Caco-2 (cell line): ENCODE measurements at regions of chr5 and their contacts with region 1.

Region 1: DNA sequence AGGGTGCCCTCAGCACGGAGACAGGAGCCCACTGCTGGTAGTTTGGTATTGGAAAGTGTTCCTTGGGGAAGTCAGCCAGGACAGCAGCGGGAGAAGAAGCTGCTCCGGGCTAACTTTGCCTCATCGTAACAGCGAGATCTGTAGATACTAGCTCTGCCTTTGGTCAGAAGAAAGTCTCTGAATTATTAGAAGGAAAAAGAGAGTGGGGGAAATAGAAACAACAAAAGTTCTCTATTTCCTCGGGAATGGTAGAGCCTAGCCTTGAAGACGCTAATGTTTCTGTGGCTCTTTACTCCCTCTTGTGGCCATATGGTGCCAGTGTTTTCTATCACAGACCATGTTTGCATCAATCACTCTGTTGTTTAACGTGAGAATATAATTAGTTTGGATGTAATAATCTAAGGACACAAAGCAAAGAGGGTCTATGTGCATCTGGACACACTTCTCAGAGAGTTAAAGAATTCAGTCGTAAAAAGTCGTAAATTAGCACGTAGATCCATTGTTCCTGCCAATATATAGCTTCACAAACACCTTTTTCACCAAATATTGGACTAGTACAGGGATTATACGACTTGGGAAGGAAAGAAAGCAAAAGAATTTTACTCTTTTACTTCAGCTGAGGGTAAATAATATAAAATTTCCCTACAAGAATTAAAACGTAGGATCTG is 40.2 kb upstream of the HSD17B4 start:
- DNase-seq: peak; percentile 60 to 67
- H3K4me3 ChIP-seq: peak overlapping the region; percentile 54
- H3K4me3 Mint-ChIP-seq: peak overlapping the region; percentile 75
- H3K27ac Mint-ChIP-seq: peak overlapping the region; percentile 68
- H3K4me1 ChIP-seq: no peaks in the 10 kb centered on the region
- H3K4me1 Mint-ChIP-seq: peaks cover under 1% of the 10 kb centered on the region
- H3K27me3 ChIP-seq: no peaks in the 10 kb centered on the region
- H3K27me3 Mint-ChIP-seq: no peaks in the 10 kb centered on the region
- CTCF ChIP-seq: peak; percentile 89 to 96

Region 2: GRCh38 chr5:119022017-119022745 is 389.9 kb before region 1 on chr5:
- CTCF ChIA-PET with region 1: interaction called, 13 read pairs
- POLR2A ChIA-PET with region 1: no interaction called
- intact Hi-C with region 1: loop called (anchors 1 kb)
- DNase-seq: peak in 1 of 2 experiments; percentile 34
- H3K4me3 ChIP-seq: no peak overlapping the region
- H3K4me3 Mint-ChIP-seq: no peak overlapping the region
- H3K27ac Mint-ChIP-seq: no peak overlapping the region
- H3K4me1 ChIP-seq: no peaks in the 10 kb centered on the region
- H3K4me1 Mint-ChIP-seq: peaks cover 7% of the 10 kb centered on the region
- H3K27me3 ChIP-seq: no peaks in the 10 kb centered on the region
- H3K27me3 Mint-ChIP-seq: no peaks in the 10 kb centered on the region
- CTCF ChIP-seq: peak; percentile 53 to 54

Region 3: DNA sequence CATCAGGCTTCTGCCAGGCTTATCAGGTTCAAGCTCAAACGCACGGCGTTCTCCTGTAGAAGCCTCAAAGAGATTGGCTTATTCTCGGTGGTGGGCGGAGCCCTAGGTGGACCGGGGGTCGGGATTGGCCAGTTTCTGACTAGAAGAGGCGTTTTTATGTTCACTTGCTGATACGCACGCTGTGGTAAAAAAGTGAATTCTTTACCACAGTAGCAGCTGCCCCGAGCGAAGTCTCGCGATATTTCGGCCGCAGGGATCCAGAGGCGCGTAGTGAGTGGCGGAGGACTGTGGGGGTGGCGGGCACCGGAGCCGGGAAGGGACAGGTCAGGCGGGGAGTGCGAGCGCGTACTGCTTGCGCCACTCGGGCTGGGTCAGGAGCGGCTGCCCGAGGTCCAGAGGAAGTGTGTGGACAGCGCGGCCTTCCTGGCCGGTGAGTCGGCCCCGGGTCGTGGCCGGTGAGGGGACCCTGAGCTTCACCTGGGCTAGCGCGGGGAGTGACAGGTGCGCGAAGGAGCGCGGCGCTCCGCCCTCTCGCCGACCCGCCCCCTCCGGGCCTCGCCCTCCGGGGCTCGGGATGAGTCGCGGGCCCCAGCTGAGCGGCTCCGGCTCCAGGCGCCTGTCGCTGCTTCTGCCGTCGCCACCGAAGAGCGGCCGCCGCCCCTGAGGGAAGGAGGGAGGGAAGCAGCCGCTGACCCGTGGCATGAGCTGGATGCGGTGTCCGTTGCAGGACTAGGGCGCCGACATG is 341.1 kb before region 1 on chr5 and contains the start of gene DMXL1:
- CTCF ChIA-PET with region 1: no interaction called
- POLR2A ChIA-PET with region 1: no interaction called
- intact Hi-C with region 1: loop called (anchors 5 kb)
- DNase-seq: peak; percentile 99 to 100
- H3K4me3 ChIP-seq: peak within 1 kb of the TSS; percentile 86
- H3K4me3 Mint-ChIP-seq: peak within 1 kb of the TSS; percentile 86
- H3K27ac Mint-ChIP-seq: peak within 1 kb of the TSS; percentile 96
- H3K4me1 ChIP-seq: no peaks in the 10 kb centered on the region
- H3K4me1 Mint-ChIP-seq: peaks cover 6% of the 10 kb centered on the region
- H3K27me3 ChIP-seq: no peaks in the 10 kb centered on the region
- H3K27me3 Mint-ChIP-seq: no peaks in the 10 kb centered on the region
- CTCF ChIP-seq: no peak
- total RNA-seq, gene DMXL1: 30.0 and 33.1 TPM in 2 replicates

Region 4: DNA sequence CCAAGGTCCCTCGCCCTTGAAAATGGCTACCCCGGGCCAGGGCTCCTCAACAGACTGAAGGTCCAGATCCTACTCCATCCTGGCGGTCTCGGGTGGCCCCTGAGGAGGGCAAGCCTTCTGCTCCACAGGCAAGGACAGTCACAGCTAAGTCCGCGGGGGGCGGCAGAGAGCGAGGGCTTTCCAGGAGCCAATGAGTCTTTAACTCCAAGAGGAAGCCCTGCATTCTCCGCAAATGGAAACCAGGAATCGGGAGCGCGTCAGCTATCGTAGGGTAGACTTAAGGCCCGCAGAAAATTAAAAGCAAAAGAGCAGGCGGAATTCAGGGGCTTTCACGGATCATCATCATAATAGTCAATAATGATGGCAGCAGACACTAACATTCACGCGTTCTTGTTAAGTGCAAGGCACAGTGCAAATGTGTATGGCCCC is 144.1 kb before region 1 on chr5:
- CTCF ChIA-PET with region 1: interaction called, 12 read pairs
- POLR2A ChIA-PET with region 1: interaction called, 7 read pairs
- intact Hi-C with region 1: loop called (anchors 1 kb)
- DNase-seq: peak; percentile 91 to 92
- H3K4me3 ChIP-seq: peak overlapping the region; percentile 68
- H3K4me3 Mint-ChIP-seq: peak overlapping the region; percentile 87
- H3K27ac Mint-ChIP-seq: peak overlapping the region; percentile 74
- H3K4me1 ChIP-seq: peaks cover under 1% of the 10 kb centered on the region
- H3K4me1 Mint-ChIP-seq: peaks cover 8% of the 10 kb centered on the region
- H3K27me3 ChIP-seq: no peaks in the 10 kb centered on the region
- H3K27me3 Mint-ChIP-seq: no peaks in the 10 kb centered on the region
- CTCF ChIP-seq: peak in 1 of 2 experiments; percentile 51

Region 5: DNA sequence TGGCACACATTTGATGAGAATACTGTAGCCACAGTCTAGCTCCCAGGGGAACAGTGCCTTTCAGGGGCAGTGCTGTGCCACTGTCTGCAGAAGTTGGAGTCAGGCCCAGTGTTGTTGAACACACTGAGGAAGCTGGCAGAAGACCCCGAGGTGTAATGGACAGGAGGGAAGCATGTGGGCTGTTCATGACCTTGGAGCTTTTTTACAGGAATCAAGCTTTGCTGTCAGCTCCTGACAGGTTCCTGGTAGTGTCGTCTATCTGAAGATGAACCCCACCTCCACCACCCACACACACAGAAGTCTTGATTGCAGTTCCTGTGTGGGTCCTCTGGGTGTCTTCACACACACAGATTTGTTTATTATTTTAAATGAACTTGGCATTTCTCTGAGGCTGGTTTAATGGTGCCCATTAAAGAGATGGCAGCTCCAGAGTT is 96.5 kb before region 1 on chr5:
- CTCF ChIA-PET with region 1: interaction called, 9 read pairs
- POLR2A ChIA-PET with region 1: no interaction called
- intact Hi-C with region 1: loop called (anchors 1 kb)
- DNase-seq: no peak
- H3K4me3 ChIP-seq: no peak overlapping the region
- H3K4me3 Mint-ChIP-seq: no peak overlapping the region
- H3K27ac Mint-ChIP-seq: no peak overlapping the region
- H3K4me1 ChIP-seq: no peaks in the 10 kb centered on the region
- H3K4me1 Mint-ChIP-seq: no peaks in the 10 kb centered on the region
- H3K27me3 ChIP-seq: no peaks in the 10 kb centered on the region
- H3K27me3 Mint-ChIP-seq: no peaks in the 10 kb centered on the region
- CTCF ChIP-seq: peak in 1 of 2 experiments; percentile 28

Region 6: DNA sequence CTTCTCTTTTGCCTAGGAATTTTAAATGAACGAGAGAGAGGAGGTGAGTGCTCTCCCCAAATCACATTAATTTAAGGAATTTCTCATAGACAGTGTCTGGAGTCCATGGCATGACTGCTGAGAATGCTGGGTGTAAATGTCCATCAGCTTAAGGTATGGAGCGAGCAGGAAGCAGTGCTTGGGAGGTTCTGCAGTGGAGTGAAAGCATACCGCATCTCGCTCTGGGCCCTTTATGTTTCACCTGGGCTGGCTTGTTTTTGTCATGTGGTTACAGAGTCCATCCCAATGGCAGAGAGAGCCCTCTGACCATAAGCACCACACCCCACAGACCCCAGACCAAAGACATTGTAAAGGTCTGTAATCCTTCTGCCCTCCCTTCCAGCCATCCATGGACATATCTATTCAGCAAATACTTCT is 76.8 kb before region 1 on chr5:
- CTCF ChIA-PET with region 1: interaction called, 3 read pairs
- POLR2A ChIA-PET with region 1: no interaction called
- intact Hi-C with region 1: loop called (anchors 1 kb)
- DNase-seq: no peak
- H3K4me3 ChIP-seq: no peak overlapping the region
- H3K4me3 Mint-ChIP-seq: no peak overlapping the region
- H3K27ac Mint-ChIP-seq: no peak overlapping the region
- H3K4me1 ChIP-seq: peaks cover 7% of the 10 kb centered on the region
- H3K4me1 Mint-ChIP-seq: peaks cover 17% of the 10 kb centered on the region
- H3K27me3 ChIP-seq: no peaks in the 10 kb centered on the region
- H3K27me3 Mint-ChIP-seq: no peaks in the 10 kb centered on the region
- CTCF ChIP-seq: no peak

Region 7: DNA sequence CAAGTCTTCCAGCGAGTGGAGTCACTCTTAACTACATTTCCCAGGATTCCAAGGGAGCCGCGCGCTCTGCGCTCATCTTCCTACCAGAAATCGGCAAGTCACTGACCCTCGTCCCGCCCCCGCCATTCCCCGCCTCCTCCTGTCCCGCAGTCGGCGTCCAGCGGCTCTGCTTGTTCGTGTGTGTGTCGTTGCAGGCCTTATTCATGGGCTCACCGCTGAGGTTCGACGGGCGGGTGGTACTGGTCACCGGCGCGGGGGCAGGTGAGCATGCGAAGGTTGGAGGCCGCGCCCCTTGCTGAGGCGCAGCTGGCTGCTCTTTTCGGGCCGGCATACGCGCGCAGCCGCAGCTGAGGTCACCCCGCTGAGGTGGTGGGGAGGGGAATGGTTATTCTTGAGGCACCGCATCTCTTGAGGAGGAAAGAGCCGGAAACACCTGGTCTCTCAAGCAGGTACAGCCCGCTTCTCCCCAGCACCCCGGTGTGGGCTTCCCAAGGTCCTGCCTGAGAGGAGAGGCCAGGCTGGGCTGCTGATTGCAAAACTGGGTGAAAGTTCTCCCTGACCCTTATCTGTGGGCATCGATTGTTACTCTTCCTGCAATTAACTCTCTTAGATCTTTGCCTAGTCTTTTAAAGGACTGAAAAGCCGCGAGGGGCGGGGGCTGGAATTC is 40.4 kb after region 1 on chr5 and contains the start of gene HSD17B4:
- CTCF ChIA-PET with region 1: no interaction called
- POLR2A ChIA-PET with region 1: no interaction called
- intact Hi-C with region 1: loop called (anchors 1 kb)
- DNase-seq: peak; percentile 91 to 95
- H3K4me3 ChIP-seq: peak within 1 kb of the TSS; percentile 62
- H3K4me3 Mint-ChIP-seq: peak within 1 kb of the TSS; percentile 96
- H3K27ac Mint-ChIP-seq: peak within 1 kb of the TSS; percentile 97
- H3K4me1 ChIP-seq: peaks cover 12% of the 10 kb centered on the region
- H3K4me1 Mint-ChIP-seq: peaks cover 7% of the 10 kb centered on the region
- H3K27me3 ChIP-seq: no peaks in the 10 kb centered on the region
- H3K27me3 Mint-ChIP-seq: no peaks in the 10 kb centered on the region
- CTCF ChIP-seq: no peak
- total RNA-seq, gene HSD17B4: 172 and 175 TPM in 2 replicates